ENCODE measurements at regions of chr13 and their contacts with region 1.

Region 1: DNA sequence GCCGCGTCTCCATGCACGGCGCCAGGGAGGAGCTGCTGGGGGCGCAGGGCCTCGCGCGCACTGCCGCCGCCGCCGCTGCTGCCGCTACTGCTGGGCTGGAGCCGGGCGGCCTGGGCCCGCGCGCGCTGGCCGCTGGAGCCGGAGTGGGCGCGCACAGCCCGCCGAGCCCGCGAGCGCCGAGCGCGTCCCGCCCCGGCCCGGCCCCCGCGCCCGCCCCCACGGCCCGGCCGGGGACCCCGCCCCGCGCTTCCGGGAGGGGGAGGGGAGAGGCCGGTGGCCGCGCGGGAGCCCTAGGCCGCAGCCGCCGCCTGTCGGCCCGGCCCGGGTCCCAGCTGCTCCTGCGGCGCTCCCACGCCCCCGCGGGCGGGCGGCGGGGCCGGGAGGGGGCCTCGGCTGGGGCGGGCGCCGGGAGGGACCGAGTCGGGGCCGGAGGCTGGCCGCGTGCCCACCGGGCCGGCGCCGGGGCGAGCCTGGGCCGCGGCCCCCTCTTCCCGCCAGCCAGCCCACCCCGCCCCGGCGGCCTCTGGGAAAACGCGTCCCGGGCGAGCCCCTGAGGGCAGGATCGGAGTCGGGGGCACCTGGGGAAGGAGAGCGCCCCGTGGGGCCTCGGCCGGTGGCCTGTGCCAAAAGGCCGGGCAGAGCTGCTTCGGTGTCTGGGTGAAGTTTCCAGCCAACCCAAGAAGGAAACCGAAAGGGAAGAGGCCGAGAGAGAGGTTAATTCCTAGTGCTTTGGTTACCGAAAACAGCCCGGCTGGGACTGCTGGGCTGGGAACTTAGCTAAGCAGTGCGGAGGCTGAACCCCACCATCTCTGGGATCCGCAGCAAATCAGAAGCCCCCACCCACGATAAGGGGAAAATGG is at the start of gene STK24:
- DNase-seq: peak in 8 of 9 experiments; percentile 32 to 82 (median 54)
- ATAC-seq: peak; percentile 55
- H3K4me3 ChIP-seq: peak within 1 kb of the TSS; percentile 64 to 66
- H3K4me3 Mint-ChIP-seq: peak within 1 kb of the TSS; percentile 92
- H3K27ac ChIP-seq: peak within 1 kb of the TSS; percentile 64 to 87
- H3K27ac Mint-ChIP-seq: peak within 1 kb of the TSS; percentile 94
- H3K4me1 ChIP-seq: peaks cover 38% of the 10 kb centered on the region
- H3K4me1 Mint-ChIP-seq: peaks cover 37% of the 10 kb centered on the region
- H3K27me3 ChIP-seq: no peaks in the 10 kb centered on the region
- H3K27me3 Mint-ChIP-seq: no peaks in the 10 kb centered on the region
- CTCF ChIP-seq: no peak
- total RNA-seq, gene STK24: 69.9 to 71.5 TPM

Region 2: GRCh38 chr13:97221989-97222700 is 1355.0 kb before region 1 on chr13 and contains the start of gene MBNL2:
- CTCF ChIA-PET with region 1: no interaction called
- POLR2A ChIA-PET with region 1: no interaction called
- intact Hi-C with region 1: loop called in 1 of 2 experiments (anchors 10 kb)
- DNase-seq: peak; percentile 72 to 93 (median 85)
- ATAC-seq: peak; percentile 97
- H3K4me3 ChIP-seq: peak within 1 kb of the TSS; percentile 57 to 76
- H3K4me3 Mint-ChIP-seq: peak within 1 kb of the TSS; percentile 88
- H3K27ac ChIP-seq: peak within 1 kb of the TSS; percentile 81 to 86
- H3K27ac Mint-ChIP-seq: peak within 1 kb of the TSS; percentile 93
- H3K4me1 ChIP-seq: peaks cover 39% of the 10 kb centered on the region
- H3K4me1 Mint-ChIP-seq: peaks cover 42% of the 10 kb centered on the region
- H3K27me3 ChIP-seq: no peaks in the 10 kb centered on the region
- H3K27me3 Mint-ChIP-seq: no peaks in the 10 kb centered on the region
- CTCF ChIP-seq: no peak
- total RNA-seq, gene MBNL2: 31.2 to 33.2 TPM

Region 3: DNA sequence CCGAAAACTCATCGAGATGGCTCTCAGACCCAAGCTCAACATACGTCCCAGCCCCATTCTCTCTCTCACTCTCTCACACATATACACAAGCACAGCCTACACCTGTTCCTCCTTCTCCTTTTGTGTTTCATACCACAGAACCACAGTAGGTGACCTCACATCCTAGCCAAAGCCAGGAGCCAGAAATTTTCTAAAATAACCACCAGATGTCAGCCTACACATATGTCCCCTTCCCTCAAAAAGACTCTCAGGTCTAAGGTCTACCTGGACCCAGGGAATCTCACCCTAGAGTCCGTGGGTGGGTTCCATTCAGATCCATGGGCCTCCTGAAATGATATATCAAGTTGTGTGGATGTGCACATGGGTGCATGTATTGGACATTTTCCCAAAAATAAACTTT is 727.9 kb before region 1 on chr13:
- CTCF ChIA-PET with region 1: no interaction called
- POLR2A ChIA-PET with region 1: no interaction called
- intact Hi-C with region 1: no loop called
- DNase-seq: peak in 1 of 9 experiments; percentile 1
- ATAC-seq: no peak
- H3K4me3 ChIP-seq: no peak overlapping the region
- H3K4me3 Mint-ChIP-seq: no peak overlapping the region
- H3K27ac ChIP-seq: no peak overlapping the region
- H3K27ac Mint-ChIP-seq: no peak overlapping the region
- H3K4me1 ChIP-seq: no peaks in the 10 kb centered on the region
- H3K4me1 Mint-ChIP-seq: no peaks in the 10 kb centered on the region
- H3K27me3 ChIP-seq: peaks cover 0 to 3% of the 10 kb centered on the region in 2 experiments
- H3K27me3 Mint-ChIP-seq: peaks cover 16% of the 10 kb centered on the region
- CTCF ChIP-seq: no peak

Region 4: DNA sequence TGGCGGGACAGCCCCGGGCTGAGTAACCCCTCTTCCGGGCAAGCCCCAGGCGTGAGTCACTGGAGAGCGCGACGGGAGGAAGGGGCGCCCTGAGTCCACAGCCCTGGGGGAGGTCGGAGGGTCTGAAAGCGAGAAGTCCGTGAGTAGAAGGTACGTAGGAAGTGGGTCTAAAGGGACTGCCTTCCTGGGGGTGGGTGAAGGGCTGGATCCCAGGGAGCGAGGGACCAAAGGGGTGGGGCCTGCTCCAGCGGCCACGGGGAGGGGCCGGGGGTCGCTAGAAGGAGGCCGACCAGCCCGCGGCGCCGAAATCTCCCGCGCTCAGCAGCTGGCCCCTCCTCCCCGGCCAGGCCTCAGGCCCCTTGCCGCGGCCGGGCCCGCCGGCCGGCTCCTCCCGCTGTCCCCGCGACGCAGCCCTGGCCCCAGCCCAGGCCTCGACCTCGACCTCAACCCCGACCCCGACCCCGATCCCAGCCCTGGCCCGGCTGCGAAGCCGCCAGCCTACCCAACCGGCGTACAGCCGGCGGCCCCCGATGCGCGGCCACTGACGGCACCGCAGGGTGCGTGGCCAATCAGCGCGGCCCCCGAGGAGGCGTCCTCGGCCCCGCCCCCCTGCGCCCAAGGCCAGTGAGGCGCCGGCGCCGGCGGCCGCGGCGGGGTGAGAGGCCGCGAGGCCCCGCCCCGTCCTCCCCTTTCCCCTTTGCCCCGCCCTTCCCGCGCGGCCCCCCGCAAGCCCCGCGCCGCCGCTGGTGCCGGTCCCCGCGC is 601.2 kb before region 1 on chr13:
- CTCF ChIA-PET with region 1: no interaction called
- POLR2A ChIA-PET with region 1: no interaction called
- intact Hi-C with region 1: loop called (anchors 5 to 10 kb)
- DNase-seq: peak; percentile 77 to 95 (median 88)
- ATAC-seq: peak; percentile 92
- H3K4me3 ChIP-seq: peak overlapping the region; percentile 89 to 92
- H3K4me3 Mint-ChIP-seq: peak overlapping the region; percentile 94
- H3K27ac ChIP-seq: peak overlapping the region; percentile 73 to 82
- H3K27ac Mint-ChIP-seq: peak overlapping the region; percentile 93
- H3K4me1 ChIP-seq: peaks cover 21% of the 10 kb centered on the region
- H3K4me1 Mint-ChIP-seq: peaks cover 42% of the 10 kb centered on the region
- H3K27me3 ChIP-seq: no peaks in the 10 kb centered on the region
- H3K27me3 Mint-ChIP-seq: no peaks in the 10 kb centered on the region
- CTCF ChIP-seq: no peak

Region 5: GRCh38 chr13:98476538-98476966 is 100.6 kb before region 1 on chr13:
- CTCF ChIA-PET with region 1: no interaction called
- POLR2A ChIA-PET with region 1: interaction called, 9 read pairs
- intact Hi-C with region 1: loop called (anchors 1 to 5 kb)
- DNase-seq: peak; percentile 57 to 95 (median 87)
- ATAC-seq: peak; percentile 90
- H3K4me3 ChIP-seq: peak overlapping the region in 1 of 2 experiments; percentile 20
- H3K4me3 Mint-ChIP-seq: peak overlapping the region; percentile 67
- H3K27ac ChIP-seq: peak overlapping the region; percentile 44 to 58
- H3K27ac Mint-ChIP-seq: peak overlapping the region; percentile 94
- H3K4me1 ChIP-seq: peaks cover 44% of the 10 kb centered on the region
- H3K4me1 Mint-ChIP-seq: peaks cover 66% of the 10 kb centered on the region
- H3K27me3 ChIP-seq: no peaks in the 10 kb centered on the region
- H3K27me3 Mint-ChIP-seq: no peaks in the 10 kb centered on the region
- CTCF ChIP-seq: no peak

Region 6: DNA sequence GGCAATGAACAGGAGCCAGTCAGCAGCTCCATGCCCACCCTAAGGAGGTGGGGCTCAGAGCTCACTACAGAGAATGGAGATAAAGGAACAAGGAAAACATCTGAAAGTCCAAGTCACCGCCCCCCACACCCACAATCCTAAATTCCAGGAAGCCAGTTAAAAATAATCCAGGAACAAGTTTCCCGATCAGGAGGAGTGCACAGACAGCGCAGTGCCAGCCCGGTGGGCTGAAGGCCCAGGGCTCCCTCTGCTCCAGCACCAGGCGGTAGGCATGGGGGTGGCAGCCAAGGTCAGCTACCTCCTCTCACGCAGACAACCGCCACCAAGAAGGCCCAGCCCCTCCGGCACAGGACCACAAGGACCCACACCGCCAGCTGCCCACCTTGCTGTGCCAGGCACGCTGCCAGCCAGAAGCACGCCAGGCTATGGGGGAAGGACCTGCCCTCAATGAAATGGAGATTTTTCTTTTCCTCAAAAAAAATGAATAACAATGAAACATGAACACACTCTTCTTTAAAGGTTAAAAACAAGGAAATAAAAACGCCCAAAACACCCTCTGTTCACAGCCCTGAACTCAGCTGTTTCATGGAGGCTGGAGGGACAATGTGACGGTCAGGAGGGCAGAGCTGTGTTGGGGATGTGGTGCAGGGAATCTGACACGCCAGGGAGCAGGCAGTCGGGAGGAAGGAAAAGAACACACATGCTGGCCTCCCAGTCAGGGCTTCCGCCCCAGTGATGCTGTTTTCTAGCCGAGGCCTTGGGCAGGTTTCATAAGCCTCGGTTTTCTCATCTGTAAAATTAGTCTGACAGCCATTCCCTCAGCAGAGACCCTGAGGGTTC is 11.2 kb before region 1 on chr13:
- CTCF ChIA-PET with region 1: interaction called, 3 read pairs
- POLR2A ChIA-PET with region 1: interaction called, 5 read pairs
- intact Hi-C with region 1: loop called in 1 of 2 experiments (anchors 1 kb)
- DNase-seq: no peak
- ATAC-seq: no peak
- H3K4me3 ChIP-seq: no peak overlapping the region
- H3K4me3 Mint-ChIP-seq: peak overlapping the region; percentile 73
- H3K27ac ChIP-seq: peak overlapping the region in 1 of 2 experiments; percentile 39
- H3K27ac Mint-ChIP-seq: peak overlapping the region; percentile 97
- H3K4me1 ChIP-seq: peaks cover 79% of the 10 kb centered on the region
- H3K4me1 Mint-ChIP-seq: peaks cover 87% of the 10 kb centered on the region
- H3K27me3 ChIP-seq: no peaks in the 10 kb centered on the region
- H3K27me3 Mint-ChIP-seq: no peaks in the 10 kb centered on the region
- CTCF ChIP-seq: no peak

Region 7: GRCh38 chr13:99606324-99607066 is 1029.3 kb after region 1 on chr13:
- CTCF ChIA-PET with region 1: no interaction called
- POLR2A ChIA-PET with region 1: no interaction called
- intact Hi-C with region 1: loop called (anchors 10 kb)
- DNase-seq: peak; percentile 82 to 95 (median 91)
- ATAC-seq: peak; percentile 93
- H3K4me3 ChIP-seq: peak within 1 kb of the TSS; percentile 89 to 93
- H3K4me3 Mint-ChIP-seq: peak within 1 kb of the TSS; percentile 92
- H3K27ac ChIP-seq: peak within 1 kb of the TSS; percentile 72 to 81
- H3K27ac Mint-ChIP-seq: peak within 1 kb of the TSS; percentile 92
- H3K4me1 ChIP-seq: peaks cover 23% of the 10 kb centered on the region
- H3K4me1 Mint-ChIP-seq: peaks cover 45% of the 10 kb centered on the region
- H3K27me3 ChIP-seq: no peaks in the 10 kb centered on the region
- H3K27me3 Mint-ChIP-seq: no peaks in the 10 kb centered on the region
- CTCF ChIP-seq: no peak